ENCODE measurements at regions of chr17 and their contacts with region 1.

Region 1: DNA sequence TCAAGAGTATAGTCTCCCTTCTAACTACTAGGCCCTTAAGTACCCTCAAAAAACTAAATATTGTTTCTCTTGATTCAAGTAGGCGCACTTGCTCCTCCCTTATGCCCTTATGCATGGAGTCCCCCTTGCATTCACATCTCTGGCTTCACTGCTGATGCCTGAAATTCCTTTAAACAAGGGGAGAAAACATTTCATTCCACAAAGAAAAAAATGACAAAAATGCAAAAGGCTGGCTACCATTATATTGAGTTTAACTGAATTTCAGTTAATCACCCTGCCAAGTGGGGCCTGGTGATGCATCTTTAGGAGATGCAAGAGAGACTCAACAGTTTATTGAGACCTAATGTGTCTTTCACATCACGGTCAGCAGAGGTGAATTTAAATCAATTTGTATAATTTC is 35.6 kb downstream of the CRLF3 start:
- DNase-seq: peak; percentile 26
- H3K4me3 ChIP-seq: no peak overlapping the region
- H3K27me3 ChIP-seq: no peaks in the 10 kb centered on the region
- CTCF ChIP-seq: no peak

Region 2: DNA sequence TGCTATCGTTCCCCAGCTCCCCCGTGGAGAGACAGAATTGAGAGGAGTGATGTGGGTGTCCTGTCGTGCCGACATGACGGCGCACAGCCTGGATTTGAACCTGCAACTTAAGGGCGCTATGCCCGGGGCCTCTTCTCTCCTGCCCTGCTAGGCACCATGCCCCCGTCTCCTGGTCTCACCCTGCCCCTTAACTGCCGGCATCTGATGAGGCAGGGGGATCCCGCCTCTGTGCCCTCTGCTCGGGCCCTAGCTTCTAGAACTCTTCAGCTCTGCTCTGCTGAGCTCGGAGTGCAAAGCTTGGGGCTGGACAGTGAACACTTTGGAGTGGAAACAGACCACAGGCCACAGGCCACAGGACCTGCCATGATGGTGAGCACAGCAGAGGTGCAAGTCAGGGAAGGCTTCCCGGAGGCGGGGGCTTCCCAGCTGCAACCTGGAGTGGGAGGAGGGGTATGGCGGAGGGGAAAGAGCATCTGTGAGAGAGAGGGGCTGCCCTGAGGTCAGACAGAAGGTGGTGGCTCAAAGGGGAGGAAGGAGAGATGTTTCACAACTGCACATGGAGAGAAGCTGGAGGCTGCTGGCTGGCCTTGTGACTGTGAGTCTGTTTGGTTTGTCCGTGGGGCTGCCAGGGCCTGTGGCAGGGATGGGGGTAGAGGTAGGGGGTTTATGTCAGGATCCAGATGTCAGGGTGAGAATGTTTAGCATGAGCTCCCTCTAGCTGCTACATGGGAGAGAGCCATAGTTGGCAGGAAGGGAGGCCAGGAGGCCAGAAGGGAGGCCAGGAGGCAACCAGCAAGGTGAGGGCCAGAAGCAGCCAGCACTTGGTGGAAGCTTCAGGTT is 72.2 kb before region 1 on chr17:
- CTCF ChIA-PET with region 1: no interaction called
- POLR2A ChIA-PET with region 1: no interaction called
- DNase-seq: no peak
- H3K4me3 ChIP-seq: no peak overlapping the region
- H3K27me3 ChIP-seq: no peaks in the 10 kb centered on the region
- CTCF ChIP-seq: peak; percentile 26; the same call in 1 of the 2 replicates

Region 3: GRCh38 chr17:30819971-30820705 is 31.2 kb after region 1 on chr17:
- CTCF ChIA-PET with region 1: no interaction called
- POLR2A ChIA-PET with region 1: interaction called, 11 read pairs
- DNase-seq: no peak
- H3K4me3 ChIP-seq: no peak overlapping the region
- H3K27me3 ChIP-seq: no peaks in the 10 kb centered on the region
- CTCF ChIP-seq: no peak

Region 4: GRCh38 chr17:30864636-30865035 is 75.7 kb after region 1 on chr17:
- CTCF ChIA-PET with region 1: no interaction called
- POLR2A ChIA-PET with region 1: no interaction called
- DNase-seq: no peak
- H3K4me3 ChIP-seq: no peak overlapping the region
- H3K27me3 ChIP-seq: no peaks in the 10 kb centered on the region
- CTCF ChIP-seq: no peak

Measured in BJ (cell line).